CD8-positive, alpha-beta T cell (primary cell): ENCODE measurements at regions of chr5 and their contacts with region 1.

Region 1: GRCh38 chr5:112958093-112959088 is 18.2 kb upstream of the DCP2 start:
- DNase-seq: no peak
- ATAC-seq: no peak
- H3K4me3 ChIP-seq: no peak overlapping the region
- H3K4me3 Mint-ChIP-seq: no peak overlapping the region
- H3K27ac ChIP-seq: no peak overlapping the region
- H3K27ac Mint-ChIP-seq: no peak overlapping the region
- H3K4me1 ChIP-seq: no peaks in the 10 kb centered on the region
- H3K4me1 Mint-ChIP-seq: peaks cover 2% of the 10 kb centered on the region
- H3K27me3 ChIP-seq: no peaks in the 10 kb centered on the region
- H3K27me3 Mint-ChIP-seq: peaks cover 2% of the 10 kb centered on the region
- CTCF ChIP-seq: no peak

Region 2: DNA sequence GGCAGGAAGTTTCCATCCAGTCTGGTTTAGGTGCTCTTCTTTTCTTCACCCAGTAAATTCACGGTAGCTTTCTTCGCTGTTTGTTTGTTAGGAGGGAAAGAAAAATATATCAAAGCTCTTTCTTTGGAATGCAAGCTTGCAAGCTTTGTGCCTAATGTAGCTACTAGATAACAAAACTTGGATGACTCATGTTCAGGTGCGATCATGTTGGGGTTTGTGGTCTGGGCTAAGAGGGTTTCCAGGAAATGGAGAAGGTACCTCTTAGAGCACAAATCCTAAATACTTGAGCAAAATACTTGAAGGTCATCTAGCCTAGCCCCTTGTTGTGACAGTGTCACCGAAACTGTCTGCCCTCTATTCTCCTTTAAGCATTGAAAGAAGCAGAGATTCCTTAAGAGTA is 79.6 kb before region 1 on chr5:
- CTCF ChIA-PET with region 1: no interaction called
- POLR2A ChIA-PET with region 1: no interaction called
- intact Hi-C with region 1: loop called in 1 of 2 experiments (anchors 5 kb)
- DNase-seq: peak in 7 of 9 experiments; percentile 26 to 69 (median 52)
- ATAC-seq: peak; percentile 90
- H3K4me3 ChIP-seq: no peak overlapping the region
- H3K4me3 Mint-ChIP-seq: peak overlapping the region; percentile 19
- H3K27ac ChIP-seq: peak overlapping the region in 1 of 2 experiments; percentile 51
- H3K27ac Mint-ChIP-seq: peak overlapping the region; percentile 69
- H3K4me1 ChIP-seq: peaks cover 16% of the 10 kb centered on the region
- H3K4me1 Mint-ChIP-seq: peaks cover 31% of the 10 kb centered on the region
- H3K27me3 ChIP-seq: no peaks in the 10 kb centered on the region
- H3K27me3 Mint-ChIP-seq: no peaks in the 10 kb centered on the region
- CTCF ChIP-seq: no peak

Region 3: DNA sequence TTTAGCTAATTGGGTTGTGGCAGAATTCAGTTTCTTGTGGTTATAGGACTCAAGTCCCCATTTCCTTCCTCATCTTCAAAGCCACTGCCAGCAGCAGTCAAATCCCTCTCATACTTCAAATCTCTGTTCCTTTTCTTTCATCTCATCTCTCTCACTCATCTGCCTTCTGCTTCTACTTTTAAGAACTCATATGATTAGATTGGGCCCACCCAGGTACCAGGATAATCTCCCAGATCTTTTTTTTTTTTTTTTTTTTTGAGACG is 28.4 kb before region 1 on chr5:
- CTCF ChIA-PET with region 1: interaction called, 3 read pairs
- POLR2A ChIA-PET with region 1: no interaction called
- intact Hi-C with region 1: loop called in 1 of 2 experiments (anchors 2 kb)
- DNase-seq: peak in 4 of 9 experiments; percentile 18 to 75 (median 49)
- ATAC-seq: peak; percentile 81
- H3K4me3 ChIP-seq: no peak overlapping the region
- H3K4me3 Mint-ChIP-seq: peak overlapping the region; percentile 36
- H3K27ac ChIP-seq: peak overlapping the region in 1 of 2 experiments; percentile 51
- H3K27ac Mint-ChIP-seq: peak overlapping the region; percentile 12
- H3K4me1 ChIP-seq: peaks cover 37% of the 10 kb centered on the region
- H3K4me1 Mint-ChIP-seq: peaks cover 41% of the 10 kb centered on the region
- H3K27me3 ChIP-seq: no peaks in the 10 kb centered on the region
- H3K27me3 Mint-ChIP-seq: no peaks in the 10 kb centered on the region
- CTCF ChIP-seq: no peak

Region 4: GRCh38 chr5:113043491-113043931 is 85.1 kb after region 1 on chr5:
- CTCF ChIA-PET with region 1: no interaction called
- POLR2A ChIA-PET with region 1: no interaction called
- intact Hi-C with region 1: no loop called
- DNase-seq: peak in 6 of 9 experiments; percentile 16 to 71 (median 40)
- ATAC-seq: no peak
- H3K4me3 ChIP-seq: no peak overlapping the region
- H3K4me3 Mint-ChIP-seq: no peak overlapping the region
- H3K27ac ChIP-seq: no peak overlapping the region
- H3K27ac Mint-ChIP-seq: no peak overlapping the region
- H3K4me1 ChIP-seq: no peaks in the 10 kb centered on the region
- H3K4me1 Mint-ChIP-seq: peaks cover 5% of the 10 kb centered on the region
- H3K27me3 ChIP-seq: no peaks in the 10 kb centered on the region
- H3K27me3 Mint-ChIP-seq: no peaks in the 10 kb centered on the region
- CTCF ChIP-seq: peak; percentile 24

Region 5: DNA sequence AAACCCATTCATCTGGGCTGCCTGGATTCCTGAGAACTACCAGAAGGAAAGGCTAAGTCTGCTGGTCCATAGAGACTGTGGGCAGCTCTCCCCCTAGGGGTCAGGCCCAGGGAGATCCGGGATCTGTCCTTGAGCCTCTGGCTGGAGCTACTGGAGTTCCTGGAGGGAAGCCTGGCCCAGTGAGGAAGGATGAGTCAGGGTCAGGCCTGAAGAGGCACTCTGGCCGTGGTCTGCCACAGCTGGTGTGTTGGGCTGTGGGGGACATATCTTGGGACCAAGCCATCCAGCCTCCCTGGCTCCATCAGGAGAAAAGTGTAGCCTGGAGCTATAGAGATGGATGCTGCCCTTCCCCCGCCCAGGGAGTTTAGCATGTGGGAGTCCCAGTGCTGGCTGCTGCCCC is 772.4 kb after region 1 on chr5:
- CTCF ChIA-PET with region 1: no interaction called
- POLR2A ChIA-PET with region 1: no interaction called
- intact Hi-C with region 1: no loop called
- DNase-seq: peak in 1 of 9 experiments; percentile 1
- ATAC-seq: no peak
- H3K4me3 ChIP-seq: no peak overlapping the region
- H3K4me3 Mint-ChIP-seq: no peak overlapping the region
- H3K27ac ChIP-seq: no peak overlapping the region
- H3K27ac Mint-ChIP-seq: no peak overlapping the region
- H3K4me1 ChIP-seq: no peaks in the 10 kb centered on the region
- H3K4me1 Mint-ChIP-seq: no peaks in the 10 kb centered on the region
- H3K27me3 ChIP-seq: no peaks in the 10 kb centered on the region
- H3K27me3 Mint-ChIP-seq: peaks cover 4% of the 10 kb centered on the region
- CTCF ChIP-seq: no peak